Activated B cell treated with CpG ODN at 0.5 μM for 24 hours (primary cell): ENCODE measurements at regions of chr11 and their contacts with region 1.

Region 1: DNA sequence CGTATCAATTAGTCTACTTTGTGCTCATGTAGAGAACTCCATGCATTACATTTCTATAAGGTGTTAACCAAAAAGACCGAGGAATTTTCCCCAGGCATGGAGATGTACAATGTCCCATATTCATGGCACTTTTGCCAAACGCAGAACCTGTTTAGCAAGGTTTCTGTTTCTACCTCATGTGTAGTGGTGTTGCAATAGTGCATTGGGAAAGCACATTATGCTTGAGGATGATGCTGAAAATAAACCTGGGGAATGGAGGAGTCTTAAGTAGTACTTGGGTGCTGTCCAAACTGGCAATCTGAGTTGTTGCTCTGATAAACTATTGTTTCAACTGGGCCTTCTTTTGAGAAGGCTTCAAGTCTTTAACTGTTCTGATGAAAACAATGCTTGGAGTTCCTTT is 11.5 kb upstream of the MUC15 start:
- DNase-seq: no peak
- ATAC-seq: no peak
- H3K4me3 Mint-ChIP-seq: no peak overlapping the region
- H3K27ac Mint-ChIP-seq: no peak overlapping the region
- H3K4me1 Mint-ChIP-seq: no peaks in the 10 kb centered on the region
- H3K27me3 Mint-ChIP-seq: no peaks in the 10 kb centered on the region
- CTCF ChIP-seq: no peak

Region 2: DNA sequence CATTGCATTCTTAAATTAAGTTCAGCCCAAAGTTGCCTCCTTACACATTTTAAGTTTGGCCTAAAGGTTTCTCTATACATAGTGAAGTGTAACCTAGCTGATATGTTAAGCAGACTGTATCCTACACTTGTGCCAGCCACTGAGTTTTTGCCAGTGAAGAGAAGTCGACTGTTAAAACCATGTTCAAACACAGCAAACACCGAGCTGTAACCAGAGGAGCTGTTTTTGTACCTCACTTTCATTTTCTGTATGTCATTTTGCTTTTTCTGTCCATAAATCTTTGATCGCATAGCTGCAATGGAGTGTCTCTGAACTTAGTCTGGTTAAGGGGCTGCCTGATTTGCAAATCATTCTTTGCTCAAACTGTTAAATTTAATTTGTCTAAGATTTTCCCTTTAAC is 1683.0 kb before region 1 on chr11:
- CTCF ChIA-PET with region 1: no interaction called
- POLR2A ChIA-PET with region 1: no interaction called
- intact Hi-C with region 1: loop called (anchors 5 kb)
- DNase-seq: no peak
- ATAC-seq: no peak
- H3K4me3 Mint-ChIP-seq: no peak overlapping the region
- H3K27ac Mint-ChIP-seq: no peak overlapping the region
- H3K4me1 Mint-ChIP-seq: peaks cover 7% of the 10 kb centered on the region
- H3K27me3 Mint-ChIP-seq: no peaks in the 10 kb centered on the region
- CTCF ChIP-seq: no peak